ENCODE measurements at regions of chr2 and their contacts with region 1.

Region 1: GRCh38 chr2:186919296-186919695 is 70.3 kb upstream of the ZSWIM2 start:
- DNase-seq: no peak
- H3K4me3 ChIP-seq: no peak overlapping the region
- H3K27ac ChIP-seq: no peak overlapping the region
- H3K4me1 ChIP-seq: no peaks in the 10 kb centered on the region
- H3K27me3 ChIP-seq: no peaks in the 10 kb centered on the region
- CTCF ChIP-seq: no peak
- EP300 ChIP-seq: no peak
- POLR2A ChIP-seq: no peak

Region 2: DNA sequence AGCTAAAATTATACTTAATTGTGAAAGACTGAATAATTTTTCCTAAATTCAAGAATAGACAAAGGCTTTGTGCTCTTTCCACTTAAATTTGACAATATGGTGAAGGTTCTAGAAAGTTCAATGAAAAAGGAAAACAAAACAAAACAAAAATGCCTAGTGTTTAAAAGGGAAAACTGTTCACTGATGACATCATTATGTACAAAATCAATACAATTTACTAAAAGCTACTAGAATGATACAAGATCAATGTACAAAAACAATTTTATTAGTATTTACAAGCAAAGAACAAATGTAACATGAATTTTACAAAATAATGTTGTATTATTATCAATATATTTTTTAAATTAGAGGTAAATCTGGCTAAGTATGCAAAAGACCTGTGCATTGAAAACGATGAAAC is 1679.8 kb before region 1 on chr2:
- intact Hi-C with region 1: loop called in 1 of 4 experiments (anchors 5 kb)
- DNase-seq: no peak
- H3K4me3 ChIP-seq: no peak overlapping the region
- H3K27ac ChIP-seq: no peak overlapping the region
- H3K4me1 ChIP-seq: no peaks in the 10 kb centered on the region
- H3K27me3 ChIP-seq: no peaks in the 10 kb centered on the region
- CTCF ChIP-seq: no peak
- EP300 ChIP-seq: no peak
- POLR2A ChIP-seq: no peak

Region 3: DNA sequence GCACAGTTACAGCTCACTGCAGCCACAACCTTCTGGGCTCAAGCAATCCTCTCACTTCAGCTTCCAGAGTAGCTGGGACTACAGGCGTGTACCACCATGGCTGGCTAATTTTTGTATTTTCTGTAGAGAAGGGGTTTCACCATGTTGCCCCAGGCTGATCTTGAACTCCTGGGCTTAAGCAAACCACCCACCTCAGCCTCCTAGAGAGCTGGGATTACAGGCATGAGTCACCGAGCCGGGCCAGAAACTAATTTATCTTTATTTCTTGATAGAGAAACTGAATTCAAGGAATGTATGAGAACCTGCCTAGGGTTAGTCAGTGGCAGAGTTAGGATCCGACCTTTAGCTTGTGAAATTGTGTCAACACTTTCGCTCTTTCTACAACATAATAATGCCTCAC is 348.7 kb before region 1 on chr2:
- intact Hi-C with region 1: no loop called
- DNase-seq: no peak
- H3K4me3 ChIP-seq: no peak overlapping the region
- H3K27ac ChIP-seq: no peak overlapping the region
- H3K4me1 ChIP-seq: no peaks in the 10 kb centered on the region
- H3K27me3 ChIP-seq: no peaks in the 10 kb centered on the region
- CTCF ChIP-seq: no peak
- EP300 ChIP-seq: no peak
- POLR2A ChIP-seq: no peak

Measured in ovary (tissue), 10 donors.